ENCODE measurements at regions of chr6 and their contacts with region 1.

Region 1: DNA sequence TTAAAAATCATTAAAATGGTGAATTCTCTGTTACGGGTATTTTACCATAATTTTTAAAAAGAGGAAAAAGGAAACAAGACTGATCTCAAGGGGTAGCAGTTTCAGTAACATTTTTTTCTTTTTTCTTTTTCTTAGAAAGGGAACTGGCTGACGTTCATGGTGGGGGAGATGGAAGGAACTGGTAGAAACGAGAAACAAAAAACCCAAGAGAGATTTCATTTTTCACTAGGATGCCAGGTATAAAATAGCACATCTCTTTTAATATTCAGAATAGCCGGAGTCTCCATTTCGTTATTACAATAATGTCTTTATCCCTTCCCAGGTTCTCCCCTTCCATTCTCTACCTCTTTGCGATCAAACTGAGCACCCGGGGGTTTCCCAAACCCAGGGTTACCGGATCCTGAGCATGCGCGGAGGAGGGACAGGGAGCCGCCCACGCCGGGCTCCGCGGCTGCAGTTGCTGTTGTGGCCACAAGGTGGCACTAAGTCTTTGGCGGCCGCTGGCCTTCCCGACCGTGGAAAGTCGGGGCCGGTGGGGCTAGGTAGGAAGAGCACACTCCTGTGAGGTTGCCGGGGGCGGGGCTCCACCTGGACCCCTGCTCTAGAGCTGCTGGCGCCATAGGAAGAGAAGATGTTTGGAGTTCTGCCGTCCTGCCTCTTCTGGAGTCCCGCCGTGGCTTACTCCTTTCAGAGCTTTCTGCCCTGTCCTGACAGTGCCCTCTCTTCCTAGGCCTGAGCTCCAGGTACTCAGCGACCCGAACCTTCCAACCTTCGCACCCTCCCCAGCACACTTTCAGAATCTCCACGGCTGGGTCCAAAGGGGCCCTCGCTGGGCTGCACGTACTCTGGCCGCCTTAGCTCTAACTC is 146.8 kb downstream of the SH3BGRL2 start:
- DNase-seq: peak; percentile 76 to 83
- ATAC-seq: peak; percentile 70 to 96 (median 90)
- H3K4me3 ChIP-seq: peak overlapping the region; percentile 47
- H3K27ac ChIP-seq: no peak overlapping the region
- H3K4me1 ChIP-seq: no peaks in the 10 kb centered on the region
- H3K27me3 ChIP-seq: no peaks in the 10 kb centered on the region
- CTCF ChIP-seq: peak; percentile 96

Region 2: GRCh38 chr6:79512014-79512413 is 265.9 kb before region 1 on chr6:
- intact Hi-C with region 1: no loop called
- DNase-seq: no peak
- ATAC-seq: no peak
- H3K4me3 ChIP-seq: no peak overlapping the region
- H3K27ac ChIP-seq: no peak overlapping the region
- H3K4me1 ChIP-seq: no peaks in the 10 kb centered on the region
- H3K27me3 ChIP-seq: no peaks in the 10 kb centered on the region
- CTCF ChIP-seq: no peak

Region 3: DNA sequence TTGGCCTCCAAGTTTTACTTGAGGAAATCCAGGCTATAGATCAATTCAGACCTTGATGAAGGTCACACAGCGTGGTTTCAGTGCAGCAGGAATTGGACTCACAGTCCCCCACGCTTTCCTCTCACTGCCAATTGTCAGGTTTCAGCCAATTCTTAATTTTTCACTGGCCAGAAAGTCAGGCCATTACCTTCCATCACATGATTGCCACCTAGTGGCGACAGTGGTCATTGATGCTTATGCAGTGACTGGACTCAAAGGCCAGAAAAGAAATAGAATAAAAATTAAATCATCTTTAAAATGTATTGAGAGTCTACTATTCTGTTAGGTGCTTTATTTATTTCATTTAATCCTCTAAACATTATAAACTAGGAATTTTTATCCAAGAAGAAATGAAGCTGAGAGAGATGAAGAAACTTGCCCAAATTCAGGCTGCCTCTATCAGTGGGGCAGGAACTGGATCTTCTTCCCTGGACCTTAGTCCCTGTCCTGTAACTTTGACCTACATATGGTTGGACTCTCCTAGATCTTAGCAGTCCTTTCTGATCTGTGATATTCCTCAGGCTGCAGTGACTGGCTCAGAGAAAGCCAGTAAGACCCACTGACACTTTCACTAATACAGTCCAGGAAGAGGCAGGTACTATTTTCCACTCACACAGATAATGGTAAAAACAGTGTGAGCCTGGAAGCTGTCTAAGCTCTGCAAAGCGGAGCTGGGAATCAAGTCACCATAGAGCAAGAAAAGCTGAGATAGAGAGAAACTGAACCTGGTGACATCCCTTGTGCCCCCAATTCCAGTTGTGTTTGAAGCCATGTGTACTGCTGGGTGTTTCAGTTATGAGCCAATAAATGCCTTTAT is 36.1 kb after region 1 on chr6:
- intact Hi-C with region 1: loop called in 1 of 2 experiments (anchors 2 kb)
- DNase-seq: peak; percentile 50 to 66
- ATAC-seq: peak in 2 of 4 donors; percentile 48 to 69
- H3K4me3 ChIP-seq: no peak overlapping the region
- H3K27ac ChIP-seq: no peak overlapping the region
- H3K4me1 ChIP-seq: no peaks in the 10 kb centered on the region
- H3K27me3 ChIP-seq: no peaks in the 10 kb centered on the region
- CTCF ChIP-seq: peak; percentile 86

Region 4: GRCh38 chr6:79841577-79842375 is 63.8 kb after region 1 on chr6:
- intact Hi-C with region 1: no loop called
- DNase-seq: no peak
- ATAC-seq: no peak
- H3K4me3 ChIP-seq: no peak overlapping the region
- H3K27ac ChIP-seq: no peak overlapping the region
- H3K4me1 ChIP-seq: no peaks in the 10 kb centered on the region
- H3K27me3 ChIP-seq: no peaks in the 10 kb centered on the region
- CTCF ChIP-seq: no peak

Region 5: DNA sequence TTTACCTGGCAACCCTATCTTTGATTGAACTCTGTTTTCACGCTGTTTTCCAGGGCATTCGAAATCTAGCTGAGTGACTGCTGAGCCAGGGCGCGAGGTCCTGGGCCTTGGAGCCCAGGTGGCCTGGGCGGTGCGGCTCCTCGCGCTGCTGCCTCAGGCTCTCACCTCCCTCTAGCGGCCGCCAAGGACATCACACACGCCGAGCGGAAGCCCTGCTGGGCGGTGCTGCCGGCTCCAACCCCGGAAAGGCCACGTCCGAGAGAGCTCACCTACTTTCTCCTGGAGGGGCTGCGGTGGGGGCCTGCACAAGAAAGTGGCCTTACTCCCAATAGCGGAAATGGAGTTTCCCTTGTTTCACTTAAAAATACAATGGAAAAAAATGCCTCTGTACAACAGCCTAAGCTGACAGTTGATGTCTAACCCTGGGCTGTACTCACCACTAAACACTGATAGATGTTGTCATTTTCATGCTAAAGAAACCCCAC is 91.7 kb after region 1 on chr6:
- intact Hi-C with region 1: loop called in 1 of 2 experiments (anchors 5 kb)
- DNase-seq: peak; percentile 71 to 84
- ATAC-seq: peak; percentile 91 to 99 (median 98)
- H3K4me3 ChIP-seq: peak overlapping the region; percentile 46
- H3K27ac ChIP-seq: no peak overlapping the region
- H3K4me1 ChIP-seq: no peaks in the 10 kb centered on the region
- H3K27me3 ChIP-seq: no peaks in the 10 kb centered on the region
- CTCF ChIP-seq: peak; percentile 88

Region 6: DNA sequence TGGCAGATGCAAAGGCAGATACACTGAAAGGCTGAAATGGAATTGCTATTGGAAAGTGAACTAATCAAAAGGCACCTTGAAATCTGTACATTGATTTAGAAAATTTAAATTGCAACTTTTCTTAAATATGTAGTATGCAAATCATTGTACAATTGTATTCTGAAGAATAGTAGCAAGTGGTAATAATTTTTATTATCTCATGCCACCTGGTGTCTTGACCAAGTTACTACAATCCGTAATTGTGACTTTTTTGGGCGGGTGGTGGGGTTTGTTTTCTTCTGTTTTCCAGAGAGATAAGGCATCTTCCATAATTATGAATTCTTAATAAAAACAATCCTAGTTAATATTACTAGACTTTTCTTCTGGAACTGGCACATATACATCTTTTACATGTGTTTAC is 316.1 kb after region 1 on chr6:
- intact Hi-C with region 1: loop called in 1 of 2 experiments (anchors 5 kb)
- DNase-seq: no peak
- ATAC-seq: no peak
- H3K4me3 ChIP-seq: no peak overlapping the region
- H3K27ac ChIP-seq: no peak overlapping the region
- H3K4me1 ChIP-seq: no peaks in the 10 kb centered on the region
- H3K27me3 ChIP-seq: no peaks in the 10 kb centered on the region
- CTCF ChIP-seq: peak; percentile 49